ENCODE measurements at regions of chr6 and their contacts with region 1.

Region 1: GRCh38 chr6:139124887-139125672 is 9.8 kb upstream of the HECA start:
- DNase-seq: peak; percentile 93
- H3K4me3 Mint-ChIP-seq: peak overlapping the region; percentile 54
- H3K27ac Mint-ChIP-seq: peak overlapping the region; percentile 94
- H3K4me1 Mint-ChIP-seq: peaks cover 56% of the 10 kb centered on the region
- H3K27me3 Mint-ChIP-seq: no peaks in the 10 kb centered on the region

Region 2: GRCh38 chr6:138817822-138818308 is 307.2 kb before region 1 on chr6:
- CTCF ChIA-PET with region 1: no interaction called
- intact Hi-C with region 1: loop called (anchors 2 kb)
- DNase-seq: peak; percentile 8
- H3K4me3 Mint-ChIP-seq: no peak overlapping the region
- H3K27ac Mint-ChIP-seq: no peak overlapping the region
- H3K4me1 Mint-ChIP-seq: peaks cover 20% of the 10 kb centered on the region
- H3K27me3 Mint-ChIP-seq: no peaks in the 10 kb centered on the region

Region 3: GRCh38 chr6:138931660-138932059 is 193.4 kb before region 1 on chr6:
- CTCF ChIA-PET with region 1: no interaction called
- intact Hi-C with region 1: no loop called
- DNase-seq: no peak
- H3K4me3 Mint-ChIP-seq: no peak overlapping the region
- H3K27ac Mint-ChIP-seq: no peak overlapping the region
- H3K4me1 Mint-ChIP-seq: peaks cover 8% of the 10 kb centered on the region
- H3K27me3 Mint-ChIP-seq: no peaks in the 10 kb centered on the region

Region 4: GRCh38 chr6:139161817-139162284 is 36.8 kb after region 1 on chr6:
- CTCF ChIA-PET with region 1: interaction called, 4 read pairs
- intact Hi-C with region 1: loop called (anchors 1 kb)
- DNase-seq: peak; percentile 88
- H3K4me3 Mint-ChIP-seq: peak overlapping the region; percentile 39
- H3K27ac Mint-ChIP-seq: peak overlapping the region; percentile 92
- H3K4me1 Mint-ChIP-seq: peaks cover 91% of the 10 kb centered on the region
- H3K27me3 Mint-ChIP-seq: no peaks in the 10 kb centered on the region

Region 5: DNA sequence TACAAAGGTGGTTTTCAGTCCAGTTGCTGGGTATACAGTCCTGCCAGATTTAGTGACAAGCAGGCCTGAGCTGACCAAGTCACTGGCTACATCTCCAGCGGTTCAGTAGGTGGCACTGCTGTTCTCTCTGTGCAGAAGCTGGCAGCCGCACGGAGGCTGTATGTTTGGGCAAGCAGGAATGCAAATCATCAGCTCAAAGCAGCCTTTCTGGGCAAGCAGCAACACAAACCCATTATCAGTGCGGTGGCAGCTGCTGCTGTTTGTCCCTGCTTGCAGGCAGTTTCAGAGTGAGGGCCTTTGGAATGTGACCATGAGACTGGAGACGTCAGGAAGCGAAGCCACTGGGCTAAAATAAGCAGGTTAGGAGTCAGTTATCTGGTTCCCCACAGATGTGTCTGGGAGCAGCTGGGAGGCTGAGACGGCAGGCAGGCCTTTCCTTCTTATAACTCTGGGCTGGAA is 94.2 kb after region 1 on chr6:
- CTCF ChIA-PET with region 1: interaction called, 10 read pairs
- intact Hi-C with region 1: loop called (anchors 1 kb)
- DNase-seq: peak; percentile 87
- H3K4me3 Mint-ChIP-seq: peak overlapping the region; percentile 5
- H3K27ac Mint-ChIP-seq: no peak overlapping the region
- H3K4me1 Mint-ChIP-seq: peaks cover 9% of the 10 kb centered on the region
- H3K27me3 Mint-ChIP-seq: no peaks in the 10 kb centered on the region

Region 6: DNA sequence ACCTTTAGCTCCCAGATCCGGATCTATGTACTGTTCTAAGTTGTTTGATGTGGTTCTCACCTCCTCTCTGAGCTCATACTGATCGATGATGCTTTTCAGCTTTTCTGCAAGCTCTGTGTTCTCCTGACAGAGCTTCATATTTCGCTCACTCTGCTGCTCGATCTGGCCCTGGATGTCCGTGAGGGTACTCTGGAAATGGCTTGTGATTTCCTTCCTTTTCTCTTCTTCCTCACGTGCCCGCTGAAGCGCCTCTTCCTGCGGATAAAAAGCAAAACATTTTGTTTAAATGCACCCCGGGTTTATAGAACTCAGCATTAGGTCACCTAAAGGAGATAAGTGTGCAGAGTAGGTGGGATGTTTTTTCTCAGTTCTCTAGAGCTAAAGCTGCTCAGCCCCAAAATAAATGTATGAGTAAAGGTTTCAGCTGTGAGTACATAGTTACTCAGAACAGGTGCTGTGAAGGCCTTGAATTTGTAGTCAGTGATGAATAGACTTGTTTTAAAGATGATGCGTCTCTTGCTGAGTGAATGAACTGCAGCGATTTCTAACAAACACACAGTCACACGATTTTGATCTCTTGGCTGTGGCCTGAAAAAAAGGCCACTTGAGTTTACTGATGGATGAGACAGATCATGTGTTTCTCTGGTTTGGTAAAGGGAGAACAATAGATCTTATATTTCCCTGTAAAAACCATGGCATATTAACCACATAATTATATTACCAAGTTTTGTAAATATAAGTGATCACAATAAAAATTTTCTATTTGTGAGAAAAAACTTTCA is 137.6 kb after region 1 on chr6:
- CTCF ChIA-PET with region 1: interaction called, 5 read pairs
- intact Hi-C with region 1: loop called (anchors 1 kb)
- DNase-seq: peak; percentile 51
- H3K4me3 Mint-ChIP-seq: peak overlapping the region; percentile 65
- H3K27ac Mint-ChIP-seq: peak overlapping the region; percentile 88
- H3K4me1 Mint-ChIP-seq: peaks cover 23% of the 10 kb centered on the region
- H3K27me3 Mint-ChIP-seq: no peaks in the 10 kb centered on the region

Region 7: GRCh38 chr6:139436200-139436997 is 311.3 kb after region 1 on chr6:
- CTCF ChIA-PET with region 1: no interaction called
- intact Hi-C with region 1: no loop called
- DNase-seq: no peak
- H3K4me3 Mint-ChIP-seq: no peak overlapping the region
- H3K27ac Mint-ChIP-seq: no peak overlapping the region
- H3K4me1 Mint-ChIP-seq: no peaks in the 10 kb centered on the region
- H3K27me3 Mint-ChIP-seq: peaks cover 2% of the 10 kb centered on the region